Ovary (tissue), 10 donors: ENCODE measurements at regions of chr3 and their contacts with region 1.

Region 1: GRCh38 chr3:13895155-13896105 is 15.6 kb upstream of the WNT7A start:
- DNase-seq: peak; percentile 95 to 99 (median 97)
- H3K4me3 ChIP-seq: peak overlapping the region; percentile 43
- H3K27ac ChIP-seq: peak overlapping the region in 1 of 2 donors; percentile 57
- H3K4me1 ChIP-seq: peaks cover 2% of the 10 kb centered on the region
- H3K27me3 ChIP-seq: no peaks in the 10 kb centered on the region
- CTCF ChIP-seq: no peak
- EP300 ChIP-seq: no peak
- POLR2A ChIP-seq: peak; percentile 73

Region 2: DNA sequence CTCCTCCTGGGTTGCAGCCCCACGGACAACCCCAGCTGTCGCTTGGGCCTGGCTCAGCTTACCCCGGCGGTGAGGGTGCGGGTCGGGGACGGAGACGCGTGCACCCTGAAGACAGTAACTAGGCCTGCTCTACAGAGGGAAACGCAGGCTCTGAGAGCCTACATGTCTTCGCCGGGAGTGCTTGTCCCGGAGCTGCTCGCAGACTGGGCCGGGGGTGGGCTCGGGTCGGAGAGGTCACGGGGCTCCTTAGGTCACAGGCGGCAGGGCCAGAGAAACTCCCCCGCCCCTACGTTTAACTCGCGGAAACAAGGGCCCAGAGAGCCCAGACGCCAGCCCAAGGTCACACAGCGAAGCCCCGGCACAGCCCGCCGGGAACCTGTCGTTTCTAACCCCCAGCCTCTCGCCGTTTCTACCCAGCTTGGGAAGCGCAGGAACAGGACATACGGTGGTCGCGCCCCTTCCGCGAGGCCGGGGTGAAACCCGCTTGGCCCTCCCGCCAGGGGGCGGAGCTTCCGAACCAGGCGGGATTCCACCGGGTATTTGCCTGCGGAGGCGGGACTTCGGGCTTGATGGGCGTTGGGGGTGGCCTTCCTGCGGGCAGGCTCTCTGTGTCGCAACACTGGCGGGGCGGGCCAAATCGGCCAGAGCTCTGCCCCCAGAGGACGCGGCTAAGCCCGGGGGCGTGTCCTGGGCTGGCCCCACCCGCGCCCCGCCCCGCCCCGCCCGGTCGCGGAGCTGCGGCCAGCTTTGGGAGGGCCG is 415.7 kb before region 1 on chr3 and contains the start of gene HDAC11:
- intact Hi-C with region 1: loop called in 1 of 4 experiments (anchors 10 kb)
- DNase-seq: peak; percentile 99 to 100 (median 99)
- H3K4me3 ChIP-seq: peak within 1 kb of the TSS; percentile 90
- H3K27ac ChIP-seq: peak within 1 kb of the TSS; percentile 50 to 78
- H3K4me1 ChIP-seq: peaks cover 7% of the 10 kb centered on the region
- H3K27me3 ChIP-seq: no peaks in the 10 kb centered on the region
- CTCF ChIP-seq: peak; percentile 24 to 43 (median 42)
- EP300 ChIP-seq: peak; percentile 57
- POLR2A ChIP-seq: peak; percentile 74
- total RNA-seq, gene HDAC11: 9.3 to 27.1 (median 19.6) TPM

Region 3: GRCh38 chr3:14118400-14119381 is 223.3 kb after region 1 on chr3:
- intact Hi-C with region 1: loop called in 2 of 4 experiments (anchors 5 to 10 kb)
- DNase-seq: peak; percentile 53 to 69 (median 65)
- H3K4me3 ChIP-seq: no peak overlapping the region
- H3K27ac ChIP-seq: peak overlapping the region; percentile 11 to 77
- H3K4me1 ChIP-seq: peaks cover 15% of the 10 kb centered on the region
- H3K27me3 ChIP-seq: no peaks in the 10 kb centered on the region
- CTCF ChIP-seq: no peak
- EP300 ChIP-seq: no peak
- POLR2A ChIP-seq: no peak

Region 4: DNA sequence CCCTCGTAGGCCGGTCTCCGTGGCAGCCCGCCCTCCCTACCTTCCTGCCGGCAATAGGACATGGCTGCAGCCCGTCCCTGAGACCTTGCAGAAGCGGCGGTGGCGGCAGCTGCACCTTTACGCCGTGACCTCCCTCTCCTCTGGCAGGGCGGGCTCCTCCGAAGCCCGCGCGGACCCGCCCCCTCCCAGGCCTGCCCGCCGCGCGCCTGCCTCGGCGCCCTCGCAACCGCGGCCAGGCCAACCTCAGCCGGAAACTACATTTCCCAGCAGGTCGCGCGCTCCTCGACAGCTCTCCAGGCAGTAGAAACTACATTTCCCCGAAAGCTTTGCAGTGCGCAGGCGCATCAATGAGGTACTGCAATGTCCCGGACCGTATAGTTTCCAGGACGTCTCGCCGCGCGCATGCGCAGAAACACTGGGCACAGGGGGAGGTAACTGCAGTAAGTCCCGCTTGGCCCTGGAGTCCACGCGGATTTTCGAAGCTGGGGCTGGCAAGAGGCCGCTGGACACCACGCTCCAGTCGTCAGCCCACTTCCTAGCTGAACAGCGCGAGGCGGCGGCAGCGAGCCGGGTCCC is 229.3 kb after region 1 on chr3 and contains the starts of genes CHCHD4 and TMEM43:
- intact Hi-C with region 1: loop called in 3 of 4 experiments (anchors 5 to 10 kb)
- DNase-seq: peak; percentile 98 to 99 (median 99)
- H3K4me3 ChIP-seq: peak within 1 kb of the TSS; percentile 72
- H3K27ac ChIP-seq: peak within 1 kb of the TSS; percentile 49 to 88
- H3K4me1 ChIP-seq: peaks cover 18% of the 10 kb centered on the region
- H3K27me3 ChIP-seq: no peaks in the 10 kb centered on the region
- CTCF ChIP-seq: no peak
- EP300 ChIP-seq: no peak
- POLR2A ChIP-seq: peak; percentile 79
- total RNA-seq, gene CHCHD4: 10.1 to 16.7 (median 12.2) TPM
- total RNA-seq, gene TMEM43: 72.0 to 100.0 (median 87.3) TPM

Region 5: DNA sequence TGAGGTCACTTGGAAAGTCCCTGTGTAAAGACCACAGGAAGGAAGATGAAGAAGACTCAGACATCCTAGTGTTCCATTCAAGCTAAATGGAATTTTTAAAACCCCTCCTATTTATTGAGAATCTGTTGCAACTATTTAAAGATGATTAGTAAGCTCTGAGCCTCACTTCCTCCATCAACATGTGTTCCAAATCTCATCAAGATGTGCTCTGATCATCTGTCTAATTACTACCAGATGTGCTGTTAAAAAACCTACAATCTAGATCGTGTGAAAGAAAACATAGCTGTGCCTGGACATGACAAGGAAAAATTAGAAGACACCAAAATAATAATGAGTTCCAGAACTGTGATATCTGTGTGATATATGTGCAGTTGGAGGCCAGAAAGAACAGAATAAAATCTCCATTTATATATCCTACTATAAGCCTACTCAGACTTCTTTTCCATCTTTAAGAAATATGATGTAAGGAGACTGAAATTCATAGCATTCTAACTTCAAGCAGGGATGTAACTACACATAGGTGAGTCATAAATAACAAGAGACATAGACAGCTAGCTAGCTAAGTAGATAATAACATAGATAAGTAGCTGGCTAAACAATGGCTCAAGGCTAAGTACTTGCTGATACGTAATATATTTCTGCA is 275.2 kb after region 1 on chr3:
- intact Hi-C with region 1: loop called in 1 of 4 experiments (anchors 5 kb)
- DNase-seq: no peak
- H3K4me3 ChIP-seq: no peak overlapping the region
- H3K27ac ChIP-seq: no peak overlapping the region
- H3K4me1 ChIP-seq: peaks cover under 1% of the 10 kb centered on the region
- H3K27me3 ChIP-seq: no peaks in the 10 kb centered on the region
- CTCF ChIP-seq: no peak
- EP300 ChIP-seq: no peak
- POLR2A ChIP-seq: no peak

Region 6: DNA sequence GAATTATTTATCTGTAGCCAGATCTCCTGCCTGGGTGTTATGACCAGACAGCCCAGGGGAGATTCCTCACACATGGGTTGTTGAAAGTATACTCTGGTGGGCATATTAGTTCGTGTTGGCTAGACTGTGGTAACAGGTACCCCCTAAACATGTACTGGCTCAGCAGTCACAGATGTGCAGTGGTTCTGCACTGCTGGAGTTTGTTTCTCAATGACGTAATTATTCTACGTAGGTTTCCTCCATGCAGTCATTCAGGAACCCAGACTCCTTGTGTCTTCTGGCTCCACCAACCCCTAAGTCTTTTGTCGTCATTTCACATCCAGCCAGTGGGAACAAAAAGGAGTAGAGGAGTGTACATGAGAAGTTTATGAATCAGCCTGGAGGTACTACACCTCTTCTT is 299.4 kb after region 1 on chr3:
- intact Hi-C with region 1: no loop called
- DNase-seq: no peak
- H3K4me3 ChIP-seq: no peak overlapping the region
- H3K27ac ChIP-seq: no peak overlapping the region
- H3K4me1 ChIP-seq: peaks cover 3% of the 10 kb centered on the region
- H3K27me3 ChIP-seq: no peaks in the 10 kb centered on the region
- CTCF ChIP-seq: no peak
- EP300 ChIP-seq: no peak
- POLR2A ChIP-seq: no peak

Region 7: DNA sequence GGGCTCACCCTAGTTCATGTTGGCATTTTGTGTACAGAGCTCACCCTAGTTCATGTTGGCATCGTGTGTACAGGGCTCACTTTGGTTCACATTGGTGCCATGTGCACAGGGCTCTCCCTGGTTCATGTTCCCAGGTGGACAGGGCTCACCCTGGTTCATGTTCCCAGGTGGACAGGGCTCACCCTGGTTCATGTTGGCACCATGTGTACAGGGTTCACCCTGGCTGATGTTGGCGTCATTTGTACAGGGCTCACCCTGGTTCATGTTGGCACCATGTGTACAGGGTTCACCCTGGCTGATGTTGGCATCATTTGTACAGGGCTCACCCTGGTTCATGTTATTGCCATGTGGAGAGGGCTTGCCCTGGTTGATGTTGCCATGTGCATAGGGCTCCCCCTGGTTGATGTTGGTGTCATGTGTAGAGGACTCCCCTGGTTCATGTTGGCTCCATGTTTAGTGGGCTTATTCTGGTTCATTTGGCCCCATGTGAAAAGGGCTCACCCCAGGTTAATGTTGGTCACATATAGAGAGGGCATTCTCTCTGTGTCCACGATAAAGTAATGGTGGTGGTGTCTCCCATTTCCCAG is 1020.3 kb after region 1 on chr3:
- intact Hi-C with region 1: loop called in 1 of 4 experiments (anchors 10 kb)
- DNase-seq: no peak
- H3K4me3 ChIP-seq: no peak overlapping the region
- H3K27ac ChIP-seq: no peak overlapping the region
- H3K4me1 ChIP-seq: no peaks in the 10 kb centered on the region
- H3K27me3 ChIP-seq: no peaks in the 10 kb centered on the region
- CTCF ChIP-seq: no peak
- EP300 ChIP-seq: no peak
- POLR2A ChIP-seq: no peak